ENCODE measurements at regions of chr9 and their contacts with region 1.

Region 1: DNA sequence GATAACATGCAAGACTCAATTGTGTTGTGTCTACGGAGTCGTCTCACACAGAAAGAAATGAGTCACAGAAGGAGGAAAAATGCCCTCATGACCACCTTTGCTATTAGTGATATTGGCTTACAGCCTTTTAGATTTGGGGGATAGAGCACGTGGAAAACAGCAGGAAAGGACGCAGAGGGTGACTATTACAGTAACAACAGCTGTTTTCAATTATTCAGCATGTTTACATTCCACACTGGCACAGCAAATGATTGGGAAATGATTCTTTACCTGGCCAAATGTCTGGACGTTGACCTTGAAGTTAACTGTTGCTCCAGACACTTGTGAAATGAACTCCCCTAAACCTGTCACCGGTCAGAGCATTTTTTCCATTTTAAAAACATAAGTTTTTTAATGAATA is 46.8 kb downstream of the APTX start:
- DNase-seq: no peak
- ATAC-seq: no peak
- H3K4me3 ChIP-seq: no peak overlapping the region
- H3K27ac ChIP-seq: no peak overlapping the region
- H3K4me1 ChIP-seq: no peaks in the 10 kb centered on the region
- H3K27me3 ChIP-seq: no peaks in the 10 kb centered on the region
- CTCF ChIP-seq: no peak

Region 2: GRCh38 chr9:32906213-32906612 is 48.4 kb before region 1 on chr9:
- CTCF ChIA-PET with region 1: no interaction called
- POLR2A ChIA-PET with region 1: no interaction called
- in situ Hi-C with region 1: no loop called
- intact Hi-C with region 1: loop called (anchors 5 kb)
- DNase-seq: no peak
- ATAC-seq: no peak
- H3K4me3 ChIP-seq: no peak overlapping the region
- H3K27ac ChIP-seq: no peak overlapping the region
- H3K4me1 ChIP-seq: no peaks in the 10 kb centered on the region
- H3K27me3 ChIP-seq: 0 out of 2 replicates have a peak, but pooled peaks cover 2% of the 10 kb centered on the region
- CTCF ChIP-seq: no peak

Region 3: DNA sequence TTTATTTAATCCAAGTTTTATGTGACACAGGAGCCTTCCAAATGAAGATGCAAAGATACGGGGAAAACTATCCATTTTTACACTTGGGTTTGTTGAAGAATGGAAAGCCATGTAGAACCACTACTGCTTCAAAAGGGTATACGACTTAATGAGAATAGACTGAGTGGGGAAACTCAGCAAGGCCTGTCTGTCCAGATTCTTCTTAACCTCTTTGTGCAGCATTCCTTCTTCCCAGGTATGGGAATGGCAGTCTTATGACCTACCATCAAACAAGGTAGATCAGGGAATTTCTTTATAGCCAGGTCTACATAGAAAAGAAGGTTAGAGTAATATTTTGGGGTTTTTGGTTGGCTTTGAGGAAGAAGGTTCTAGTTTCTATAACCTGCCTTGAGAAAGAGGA is 23.4 kb after region 1 on chr9:
- CTCF ChIA-PET with region 1: no interaction called
- POLR2A ChIA-PET with region 1: no interaction called
- in situ Hi-C with region 1: no loop called
- intact Hi-C with region 1: no loop called
- DNase-seq: no peak
- ATAC-seq: no peak
- H3K4me3 ChIP-seq: no peak overlapping the region
- H3K27ac ChIP-seq: no peak overlapping the region
- H3K4me1 ChIP-seq: no peaks in the 10 kb centered on the region
- H3K27me3 ChIP-seq: no peaks in the 10 kb centered on the region
- CTCF ChIP-seq: no peak

Region 4: GRCh38 chr9:33044127-33044673 is 89.6 kb after region 1 on chr9:
- CTCF ChIA-PET with region 1: no interaction called
- POLR2A ChIA-PET with region 1: no interaction called
- in situ Hi-C with region 1: no loop called
- intact Hi-C with region 1: no loop called
- DNase-seq: peak; percentile 73
- ATAC-seq: peak; percentile 90
- H3K4me3 ChIP-seq: peak overlapping the region; percentile 60 to 72
- H3K27ac ChIP-seq: peak overlapping the region; percentile 93
- H3K4me1 ChIP-seq: peaks cover 23% of the 10 kb centered on the region
- H3K27me3 ChIP-seq: no peaks in the 10 kb centered on the region
- CTCF ChIP-seq: no peak